MCF 10A (cell line): ENCODE measurements at regions of chr4 and their contacts with region 1.

Region 1: GRCh38 chr4:152408514-152409327 is 127.2 kb downstream of the FBXW7 start:
- DNase-seq: peak; percentile 60
- H3K4me3 Mint-ChIP-seq: no peak overlapping the region
- H3K27ac Mint-ChIP-seq: no peak overlapping the region
- H3K4me1 Mint-ChIP-seq: peaks cover 6% of the 10 kb centered on the region
- H3K27me3 Mint-ChIP-seq: no peaks in the 10 kb centered on the region
- CTCF ChIP-seq: peak; percentile 55

Region 2: DNA sequence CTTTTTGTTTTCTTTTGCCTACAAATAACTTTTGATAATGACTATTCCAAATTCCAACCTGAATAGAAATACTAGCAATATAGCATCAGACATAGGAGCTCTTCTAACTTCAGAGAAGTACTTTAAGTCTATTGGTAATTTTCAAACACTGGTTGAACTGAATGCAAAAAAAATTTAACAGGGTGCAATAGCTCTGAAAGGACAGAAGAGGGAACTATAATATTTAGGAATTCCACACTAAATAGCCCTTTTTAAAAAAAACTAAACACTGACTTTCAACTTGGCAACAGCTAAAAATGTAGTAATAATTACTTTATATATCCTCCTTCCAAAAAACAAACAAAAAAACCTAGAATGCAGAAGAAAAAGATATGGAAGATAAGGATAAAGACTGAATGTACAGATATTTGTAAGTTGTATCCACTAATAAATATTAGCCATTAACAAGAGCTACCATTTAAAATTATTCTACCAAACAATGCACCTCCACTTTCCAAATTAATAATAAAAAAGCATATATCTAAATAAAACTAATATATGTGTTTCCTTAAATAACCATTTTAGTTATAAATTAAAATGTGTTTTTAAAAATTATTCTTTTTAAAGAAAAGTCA is 45.8 kb after region 1 on chr4:
- CTCF ChIA-PET with region 1: interaction called, 6 read pairs
- POLR2A ChIA-PET with region 1: no interaction called
- intact Hi-C with region 1: loop called (anchors 1 kb)
- DNase-seq: peak; percentile 24
- H3K4me3 Mint-ChIP-seq: no peak overlapping the region
- H3K27ac Mint-ChIP-seq: no peak overlapping the region
- H3K4me1 Mint-ChIP-seq: peaks cover 35% of the 10 kb centered on the region
- H3K27me3 Mint-ChIP-seq: no peaks in the 10 kb centered on the region
- CTCF ChIP-seq: peak; percentile 60